AG04449 (cell line): ENCODE measurements at regions of chr12 and their contacts with region 1.

Region 1: DNA sequence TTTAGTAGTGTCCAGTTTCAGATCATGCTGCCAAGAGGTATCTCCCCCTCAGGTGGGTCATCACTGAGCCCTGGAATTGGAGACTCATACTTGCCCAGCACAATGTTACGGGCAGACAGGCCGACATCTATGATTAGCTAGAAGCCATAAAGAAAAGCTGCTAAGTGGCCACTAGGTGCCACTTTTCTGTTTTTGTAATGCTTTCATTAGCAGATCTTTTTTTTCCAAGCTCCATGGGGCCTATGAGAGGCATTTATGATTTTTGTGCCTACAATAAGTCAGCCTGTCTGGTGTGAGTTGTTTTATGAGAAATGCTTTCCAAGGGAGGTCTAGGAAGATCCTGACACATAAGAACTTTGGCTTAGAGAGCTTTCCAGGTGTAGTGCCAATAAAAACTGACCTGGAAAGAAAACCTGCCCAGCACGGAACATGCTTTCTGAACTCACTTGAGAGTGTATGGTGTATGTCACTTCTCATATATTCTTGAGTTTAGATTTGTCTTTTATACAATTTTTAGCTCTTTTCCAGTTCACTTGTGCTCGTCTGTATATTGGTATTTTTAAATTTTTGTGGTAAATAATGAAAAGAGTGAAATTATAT is 21.8 kb upstream of the SMCO2 start:
- DNase-seq: peak; percentile 31
- H3K4me3 ChIP-seq: no peak overlapping the region
- CTCF ChIP-seq: peak; percentile 53

Region 2: DNA sequence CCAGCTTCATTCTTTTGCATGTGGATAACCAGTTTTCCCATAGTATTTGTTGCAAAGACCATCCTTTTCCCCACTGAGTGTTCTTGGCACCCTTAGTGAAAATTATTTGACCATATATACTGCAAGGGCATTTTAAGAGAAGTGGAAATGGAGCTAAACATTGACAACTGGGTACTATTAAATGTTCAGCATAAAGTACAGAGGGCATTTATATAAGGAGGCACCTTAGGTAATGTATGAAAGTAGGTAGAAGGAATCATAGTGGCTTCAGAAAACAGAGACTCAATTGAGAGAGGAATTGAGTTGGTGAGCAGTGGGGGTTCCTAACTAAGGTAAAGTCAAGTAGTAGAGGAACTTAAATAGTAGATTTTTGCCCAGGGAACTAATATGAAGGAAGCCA is 12.7 kb before region 1 on chr12:
- CTCF ChIA-PET with region 1: interaction called, 12 read pairs
- POLR2A ChIA-PET with region 1: no interaction called
- DNase-seq: no peak
- H3K4me3 ChIP-seq: no peak overlapping the region
- CTCF ChIP-seq: no peak

Region 3: GRCh38 chr12:27622436-27623195 is 197.9 kb after region 1 on chr12:
- CTCF ChIA-PET with region 1: no interaction called
- POLR2A ChIA-PET with region 1: no interaction called
- DNase-seq: no peak
- H3K4me3 ChIP-seq: no peak overlapping the region
- CTCF ChIP-seq: no peak

Region 4: GRCh38 chr12:27635349-27635972 is 210.7 kb after region 1 on chr12:
- CTCF ChIA-PET with region 1: interaction called, 32 read pairs
- POLR2A ChIA-PET with region 1: no interaction called
- DNase-seq: no peak
- H3K4me3 ChIP-seq: no peak overlapping the region
- CTCF ChIP-seq: peak; percentile 47